ENCODE measurements at regions of chr1 and their contacts with region 1.

Region 1: DNA sequence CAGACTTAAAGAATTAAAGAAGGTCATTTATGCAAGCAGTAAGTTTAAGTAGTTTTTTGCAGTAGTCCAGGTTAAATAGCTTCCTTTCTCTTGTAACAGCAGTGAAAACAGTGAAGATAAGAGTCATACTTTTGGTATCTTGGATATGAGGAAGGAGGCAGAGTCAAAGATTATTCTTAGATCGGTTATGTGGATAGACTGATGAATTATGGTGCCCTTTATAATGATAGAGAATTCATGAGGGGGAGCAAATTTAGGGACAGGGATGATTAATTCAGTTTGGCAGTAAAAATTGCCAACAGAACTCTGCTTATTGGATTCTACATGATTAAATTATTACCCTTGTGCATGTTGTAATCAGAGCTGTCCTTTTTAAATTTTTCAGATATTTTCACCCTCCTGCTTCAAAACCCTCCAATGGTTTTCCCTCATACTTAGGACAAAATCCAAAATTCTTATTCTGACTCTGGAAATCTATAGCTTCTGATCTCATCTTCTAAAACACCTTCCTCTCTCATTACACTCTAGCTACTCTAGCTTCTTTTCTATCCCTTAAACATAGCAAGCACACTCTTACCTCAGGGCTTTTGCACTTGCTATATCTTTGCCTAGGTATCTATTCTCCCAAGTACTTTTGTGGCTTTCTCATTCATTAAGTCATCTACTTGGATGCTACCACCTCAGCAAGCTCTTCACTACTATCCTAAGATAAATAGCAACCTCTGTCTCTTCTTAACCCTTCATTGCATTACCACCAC is 79.8 kb downstream of the PKN2 start:
- DNase-seq: no peak
- H3K4me3 ChIP-seq: no peak overlapping the region
- H3K27ac ChIP-seq: no peak overlapping the region
- H3K27me3 ChIP-seq: no peaks in the 10 kb centered on the region
- CTCF ChIP-seq: no peak

Region 2: DNA sequence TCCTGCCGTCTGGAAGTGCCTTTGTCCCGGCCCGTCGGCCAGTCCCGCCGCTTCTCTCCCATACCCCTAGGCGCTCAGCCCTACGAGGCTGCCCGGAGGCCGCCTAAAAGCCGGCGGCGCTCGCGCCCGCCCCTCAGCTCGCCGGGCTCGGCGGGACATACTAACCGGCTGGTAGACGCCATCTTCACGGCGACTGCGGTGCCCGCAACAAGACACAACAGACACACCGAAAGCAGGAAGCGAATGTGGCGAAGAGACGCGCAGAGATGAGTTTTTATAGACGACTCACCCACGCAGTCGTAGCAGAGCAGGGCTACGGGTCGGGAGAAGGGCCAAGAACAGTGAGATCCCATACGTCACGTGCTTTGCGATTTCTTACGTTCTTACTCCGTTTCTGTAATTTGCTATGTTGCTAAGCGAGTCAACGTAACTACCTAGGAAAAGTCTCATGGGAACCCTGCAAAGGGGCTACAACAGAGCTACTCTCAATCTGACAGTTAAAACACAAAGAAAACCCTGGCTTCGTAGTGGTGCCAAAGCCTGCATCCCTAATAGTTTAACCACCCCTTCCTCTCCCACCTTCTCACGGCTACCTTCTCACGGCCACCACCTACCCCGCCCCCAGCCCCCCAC is 127.6 kb after region 1 on chr1 and contains the start of gene GTF2B:
- CTCF ChIA-PET with region 1: no interaction called
- POLR2A ChIA-PET with region 1: interaction called, 12 read pairs
- DNase-seq: peak; percentile 95
- H3K4me3 ChIP-seq: peak within 1 kb of the TSS; percentile 97
- H3K27ac ChIP-seq: peak within 1 kb of the TSS; percentile 74
- H3K27me3 ChIP-seq: peaks cover 2% of the 10 kb centered on the region
- CTCF ChIP-seq: no peak
- polyA plus RNA-seq, gene GTF2B: 37.1 and 51.7 TPM in 2 replicates